ENCODE measurements at regions of chr15 and their contacts with region 1.

Region 1: GRCh38 chr15:34795267-34796081 is at the start of gene ACTC1:
- DNase-seq: peak; percentile 89
- total RNA-seq, gene ACTC1: 11,631 TPM

Region 2: GRCh38 chr15:34718681-34719641 is 76.5 kb before region 1 on chr15:
- intact Hi-C with region 1: loop called (anchors 2 kb)
- DNase-seq: no peak

Region 3: DNA sequence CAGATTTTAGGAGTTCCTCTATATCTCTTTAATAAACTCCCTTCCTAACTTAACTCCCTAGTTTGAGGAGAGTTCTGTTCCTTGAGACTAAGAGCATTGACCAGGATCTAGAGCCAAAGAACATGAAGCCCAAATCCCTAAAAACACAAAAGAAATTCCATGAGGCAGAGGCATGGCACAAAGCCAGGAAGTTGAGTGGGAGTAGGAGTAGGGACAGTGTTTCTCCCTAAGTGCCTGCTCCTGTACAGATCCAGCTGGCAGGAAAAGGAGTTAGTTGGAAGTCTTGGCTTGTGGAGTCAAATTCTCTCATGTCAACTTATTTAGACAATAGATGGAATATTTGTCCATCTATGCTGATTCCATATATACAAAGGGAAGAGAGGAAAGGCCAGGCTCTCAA is 11.5 kb before region 1 on chr15:
- intact Hi-C with region 1: no loop called
- DNase-seq: no peak

Region 4: GRCh38 chr15:34855397-34855796 is 59.9 kb after region 1 on chr15:
- intact Hi-C with region 1: loop called (anchors 10 kb)
- DNase-seq: no peak

Measured in cardiac septum (tissue), 1 donor.